IMR-90 (cell line): ENCODE measurements at regions of chr6 and their contacts with region 1.

Region 1: GRCh38 chr6:70955441-70956190 is 1.2 kb downstream of the B3GAT2 start:
- DNase-seq: peak; percentile 65
- ATAC-seq: peak; percentile 92
- H3K4me3 ChIP-seq: peak overlapping the region; percentile 33
- H3K27ac ChIP-seq: no peak overlapping the region
- H3K4me1 ChIP-seq: no peaks in the 10 kb centered on the region
- H3K27me3 ChIP-seq: peaks cover 46% of the 10 kb centered on the region
- CTCF ChIP-seq: peak; percentile 68
- POLR2A ChIP-seq: no peak
- RAD21 ChIP-seq: peak; percentile 59

Region 2: DNA sequence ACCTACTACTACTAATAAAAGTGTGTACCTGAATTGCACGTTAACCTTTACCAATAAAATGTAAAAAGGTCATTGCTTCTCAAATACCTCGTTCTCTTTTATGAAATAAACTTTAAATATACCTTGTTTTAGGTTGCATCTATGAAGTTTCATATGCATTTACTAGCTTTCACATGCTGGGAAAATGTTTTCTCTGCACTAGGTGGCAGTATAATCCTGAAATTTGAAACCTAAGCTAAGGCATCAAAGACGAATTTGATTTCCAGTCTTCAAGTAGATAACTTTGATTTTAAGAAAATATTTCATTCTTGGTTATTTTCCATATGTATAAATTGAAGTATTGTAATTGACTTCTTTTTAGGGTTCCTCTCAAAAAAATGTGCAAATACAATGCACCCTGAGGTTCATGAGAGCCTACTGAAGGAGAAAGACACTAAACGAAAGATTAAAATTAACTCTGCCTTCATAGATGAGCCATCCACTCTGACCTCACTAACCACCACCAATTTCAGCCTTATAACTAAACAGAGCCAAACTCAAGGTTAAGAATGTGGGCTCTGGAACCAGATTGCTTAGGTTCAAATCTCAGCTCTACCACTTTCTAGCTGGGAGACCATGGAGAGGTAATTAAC is 645.4 kb before region 1 on chr6:
- CTCF ChIA-PET with region 1: no interaction called
- POLR2A ChIA-PET with region 1: no interaction called
- dilution Hi-C with region 1: no loop called
- in situ Hi-C with region 1: no loop called
- intact Hi-C with region 1: loop called (anchors 5 kb)
- DNase-seq: peak; percentile 53
- ATAC-seq: no peak; the same call in 1 of the 2 replicates
- H3K4me3 ChIP-seq: no peak overlapping the region
- H3K27ac ChIP-seq: no peak overlapping the region
- H3K4me1 ChIP-seq: no peaks in the 10 kb centered on the region
- H3K27me3 ChIP-seq: peaks cover 33% of the 10 kb centered on the region
- CTCF ChIP-seq: peak; percentile 73
- POLR2A ChIP-seq: no peak
- RAD21 ChIP-seq: peak; percentile 56

Region 3: GRCh38 chr6:70520575-70520974 is 435.0 kb before region 1 on chr6:
- CTCF ChIA-PET with region 1: no interaction called
- POLR2A ChIA-PET with region 1: no interaction called
- dilution Hi-C with region 1: no loop called
- in situ Hi-C with region 1: no loop called
- intact Hi-C with region 1: loop called (anchors 2 kb)
- DNase-seq: peak; percentile 18
- ATAC-seq: no peak
- H3K4me3 ChIP-seq: no peak overlapping the region
- H3K27ac ChIP-seq: no peak overlapping the region
- H3K4me1 ChIP-seq: no peaks in the 10 kb centered on the region
- H3K27me3 ChIP-seq: no peaks in the 10 kb centered on the region
- CTCF ChIP-seq: peak; percentile 49
- POLR2A ChIP-seq: no peak
- RAD21 ChIP-seq: peak; percentile 64

Region 4: GRCh38 chr6:70566751-70567382 is 388.7 kb before region 1 on chr6 and contains the start of gene SDHAF4:
- CTCF ChIA-PET with region 1: interaction called, 10 read pairs
- POLR2A ChIA-PET with region 1: no interaction called
- dilution Hi-C with region 1: no loop called
- in situ Hi-C with region 1: no loop called
- intact Hi-C with region 1: no loop called
- DNase-seq: peak; percentile 76
- ATAC-seq: peak; percentile 100
- H3K4me3 ChIP-seq: peak within 1 kb of the TSS; percentile 90
- H3K27ac ChIP-seq: peak within 1 kb of the TSS; percentile 68
- H3K4me1 ChIP-seq: no peaks in the 10 kb centered on the region
- H3K27me3 ChIP-seq: no peaks in the 10 kb centered on the region
- CTCF ChIP-seq: no peak
- POLR2A ChIP-seq: no peak; the same call in 1 of the 2 replicates
- RAD21 ChIP-seq: no peak
- total RNA-seq, gene SDHAF4: 1.6 and 2.5 TPM in 2 replicates

Region 5: GRCh38 chr6:70884074-70884983 is 71.3 kb before region 1 on chr6:
- CTCF ChIA-PET with region 1: no interaction called
- POLR2A ChIA-PET with region 1: no interaction called
- dilution Hi-C with region 1: no loop called
- in situ Hi-C with region 1: no loop called
- intact Hi-C with region 1: loop called (anchors 2 kb)
- DNase-seq: peak; percentile 33
- ATAC-seq: peak; percentile 97
- H3K4me3 ChIP-seq: no peak overlapping the region
- H3K27ac ChIP-seq: no peak overlapping the region
- H3K4me1 ChIP-seq: no peaks in the 10 kb centered on the region
- H3K27me3 ChIP-seq: peaks cover 12% of the 10 kb centered on the region
- CTCF ChIP-seq: peak; percentile 88
- POLR2A ChIP-seq: 0 out of 2 replicates have a peak, but pooled peaks have one; percentile 22
- RAD21 ChIP-seq: peak; percentile 91

Region 6: GRCh38 chr6:71468841-71469750 is 513.5 kb after region 1 on chr6:
- CTCF ChIA-PET with region 1: no interaction called
- POLR2A ChIA-PET with region 1: no interaction called
- dilution Hi-C with region 1: no loop called
- in situ Hi-C with region 1: no loop called
- intact Hi-C with region 1: no loop called
- DNase-seq: peak; percentile 95
- ATAC-seq: peak; percentile 91
- H3K4me3 ChIP-seq: peak overlapping the region; percentile 56; the same call in 1 of the 2 replicates
- H3K27ac ChIP-seq: peak overlapping the region; percentile 93
- H3K4me1 ChIP-seq: peaks cover 7% of the 10 kb centered on the region
- H3K27me3 ChIP-seq: no peaks in the 10 kb centered on the region
- CTCF ChIP-seq: no peak
- POLR2A ChIP-seq: no peak
- RAD21 ChIP-seq: no peak